Activated B cell treated with CpG ODN at 0.5 μM for 24 hours (primary cell): ENCODE measurements at regions of chr5 and their contacts with region 1.

Region 1: DNA sequence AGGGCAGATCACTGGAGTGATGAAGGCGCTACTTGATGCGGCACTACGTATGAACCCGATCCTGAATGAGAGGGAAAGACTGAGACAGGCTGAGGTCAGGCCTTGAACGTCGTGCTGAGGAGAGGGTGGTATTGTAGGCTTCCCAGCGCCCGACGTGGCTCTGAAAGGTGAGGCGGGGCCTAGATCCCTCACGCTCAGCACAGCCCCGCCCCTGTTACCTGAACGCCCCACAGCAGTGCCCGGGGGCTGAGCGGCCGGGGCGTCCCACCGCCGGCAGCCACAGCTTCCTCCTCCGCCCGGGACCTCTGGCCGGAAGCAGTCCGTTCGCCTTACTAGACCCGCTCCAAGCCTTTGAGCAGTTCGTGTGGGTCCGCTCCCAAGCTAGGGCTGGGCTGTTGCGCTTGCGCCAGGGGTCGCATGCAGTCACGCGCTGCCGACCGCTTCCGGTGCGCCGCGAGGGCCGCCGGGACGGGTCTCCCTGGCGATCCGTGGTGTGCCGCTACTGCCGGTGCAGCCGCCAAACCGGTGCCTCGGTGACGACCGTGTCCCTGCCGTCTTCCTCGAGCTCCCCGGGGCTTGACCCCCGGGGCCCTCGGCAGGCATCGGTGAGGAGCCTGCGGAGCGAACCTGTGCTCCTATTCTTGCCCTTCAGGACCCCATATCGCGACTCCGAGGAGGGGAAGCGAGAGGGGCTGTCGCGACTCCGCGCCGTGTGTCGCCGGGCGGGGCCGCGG is at the starts of genes HMGXB3 and TIGD6:
- DNase-seq: peak; percentile 87
- ATAC-seq: peak; percentile 85
- H3K4me3 Mint-ChIP-seq: peak within 1 kb of the TSS; percentile 95
- H3K27ac Mint-ChIP-seq: peak within 1 kb of the TSS; percentile 91
- H3K4me1 Mint-ChIP-seq: peaks cover 28% of the 10 kb centered on the region
- H3K27me3 Mint-ChIP-seq: no peaks in the 10 kb centered on the region
- CTCF ChIP-seq: no peak
- total RNA-seq, gene HMGXB3: 28.5 and 36.8 TPM in 2 replicates
- total RNA-seq, gene TIGD6: 3.5 and 4.2 TPM in 2 replicates

Region 2: GRCh38 chr5:149357370-149358293 is 642.8 kb before region 1 on chr5 and contains the start of gene PCYOX1L:
- CTCF ChIA-PET with region 1: no interaction called
- POLR2A ChIA-PET with region 1: no interaction called
- intact Hi-C with region 1: loop called (anchors 2 kb)
- DNase-seq: peak; percentile 84
- ATAC-seq: peak; percentile 100
- H3K4me3 Mint-ChIP-seq: peak within 1 kb of the TSS; percentile 92
- H3K27ac Mint-ChIP-seq: peak within 1 kb of the TSS; percentile 65
- H3K4me1 Mint-ChIP-seq: peaks cover 16% of the 10 kb centered on the region
- H3K27me3 Mint-ChIP-seq: no peaks in the 10 kb centered on the region
- CTCF ChIP-seq: no peak
- total RNA-seq, gene PCYOX1L: 6.1 and 9.2 TPM in 2 replicates

Region 3: DNA sequence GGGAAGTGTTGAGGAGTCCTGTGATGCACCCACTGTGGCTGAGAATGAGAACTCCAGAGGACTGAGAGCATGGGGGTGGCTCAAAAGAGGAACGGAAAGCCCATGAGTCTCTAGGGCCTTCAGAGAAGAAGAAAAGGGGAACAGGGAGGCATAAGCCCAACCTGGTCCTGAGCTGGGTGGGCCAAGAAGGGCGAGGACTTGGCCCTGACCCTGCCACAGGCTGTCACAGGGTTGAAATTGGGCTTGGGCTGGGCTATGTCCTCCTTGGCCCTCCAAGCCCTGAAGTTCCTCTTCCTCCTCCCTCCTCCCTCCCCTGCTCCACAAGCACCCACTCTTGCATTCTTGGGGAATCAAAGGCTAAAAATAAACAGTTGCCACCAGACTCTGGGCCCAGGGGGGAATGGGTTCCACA is 319.6 kb before region 1 on chr5:
- CTCF ChIA-PET with region 1: no interaction called
- POLR2A ChIA-PET with region 1: no interaction called
- intact Hi-C with region 1: loop called (anchors 1 kb)
- DNase-seq: peak; percentile 46
- ATAC-seq: peak; percentile 97
- H3K4me3 Mint-ChIP-seq: peak overlapping the region; percentile 28
- H3K27ac Mint-ChIP-seq: peak overlapping the region; percentile 80
- H3K4me1 Mint-ChIP-seq: peaks cover 55% of the 10 kb centered on the region
- H3K27me3 Mint-ChIP-seq: no peaks in the 10 kb centered on the region
- CTCF ChIP-seq: no peak

Region 4: DNA sequence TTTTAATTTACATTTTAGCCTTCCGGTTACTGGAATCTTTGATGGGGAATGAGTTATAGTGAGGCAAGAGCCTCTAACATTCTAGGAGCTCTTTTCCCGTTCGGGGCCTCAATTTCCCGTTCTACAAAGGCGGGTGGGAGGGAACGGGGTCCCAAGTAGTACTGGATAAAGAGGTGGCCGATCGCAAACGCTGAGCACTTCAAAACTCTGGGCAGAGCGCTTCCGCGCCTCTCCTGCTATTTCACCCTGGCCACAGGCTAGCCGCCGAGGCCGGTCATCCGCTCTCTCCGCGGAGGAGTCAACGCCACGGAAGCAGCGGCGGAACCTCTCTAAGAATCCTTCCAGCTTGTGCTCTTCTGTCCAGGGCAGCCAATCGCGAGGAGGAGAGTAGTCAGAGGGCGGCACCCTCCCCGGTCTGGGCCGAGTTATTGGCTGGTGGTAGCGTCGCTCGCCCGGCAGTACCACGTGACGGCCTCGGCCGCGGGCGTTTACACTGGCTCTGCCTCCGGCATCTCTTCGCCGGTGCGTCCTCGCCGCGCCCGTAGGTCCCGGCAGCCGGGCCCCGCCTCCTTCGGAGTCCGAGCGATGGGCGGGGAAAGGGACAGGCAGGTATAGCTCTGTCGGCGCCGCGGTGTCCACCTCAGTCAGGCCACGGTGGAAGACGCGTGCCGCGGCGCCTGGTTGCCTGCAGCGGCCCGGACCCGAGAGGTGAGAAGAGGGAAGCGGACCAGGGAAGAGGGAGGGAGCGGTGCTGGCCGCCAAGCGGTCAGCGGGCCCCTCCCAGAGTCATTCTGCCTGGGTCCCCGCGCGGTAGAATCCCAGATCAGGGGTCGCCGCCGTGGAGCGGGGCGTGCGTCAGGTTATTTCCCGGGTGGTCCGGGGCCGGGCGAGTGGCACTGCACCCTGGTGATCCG is 39.9 kb before region 1 on chr5 and contains the start of gene SLC26A2:
- CTCF ChIA-PET with region 1: interaction called, 3 read pairs
- POLR2A ChIA-PET with region 1: interaction called, 39 read pairs
- intact Hi-C with region 1: loop called (anchors 1 kb)
- DNase-seq: peak; percentile 88
- ATAC-seq: peak; percentile 97
- H3K4me3 Mint-ChIP-seq: peak within 1 kb of the TSS; percentile 98
- H3K27ac Mint-ChIP-seq: peak within 1 kb of the TSS; percentile 98
- H3K4me1 Mint-ChIP-seq: peaks cover 20% of the 10 kb centered on the region
- H3K27me3 Mint-ChIP-seq: no peaks in the 10 kb centered on the region
- CTCF ChIP-seq: no peak
- total RNA-seq, gene SLC26A2: 8.9 and 11.0 TPM in 2 replicates

Region 5: DNA sequence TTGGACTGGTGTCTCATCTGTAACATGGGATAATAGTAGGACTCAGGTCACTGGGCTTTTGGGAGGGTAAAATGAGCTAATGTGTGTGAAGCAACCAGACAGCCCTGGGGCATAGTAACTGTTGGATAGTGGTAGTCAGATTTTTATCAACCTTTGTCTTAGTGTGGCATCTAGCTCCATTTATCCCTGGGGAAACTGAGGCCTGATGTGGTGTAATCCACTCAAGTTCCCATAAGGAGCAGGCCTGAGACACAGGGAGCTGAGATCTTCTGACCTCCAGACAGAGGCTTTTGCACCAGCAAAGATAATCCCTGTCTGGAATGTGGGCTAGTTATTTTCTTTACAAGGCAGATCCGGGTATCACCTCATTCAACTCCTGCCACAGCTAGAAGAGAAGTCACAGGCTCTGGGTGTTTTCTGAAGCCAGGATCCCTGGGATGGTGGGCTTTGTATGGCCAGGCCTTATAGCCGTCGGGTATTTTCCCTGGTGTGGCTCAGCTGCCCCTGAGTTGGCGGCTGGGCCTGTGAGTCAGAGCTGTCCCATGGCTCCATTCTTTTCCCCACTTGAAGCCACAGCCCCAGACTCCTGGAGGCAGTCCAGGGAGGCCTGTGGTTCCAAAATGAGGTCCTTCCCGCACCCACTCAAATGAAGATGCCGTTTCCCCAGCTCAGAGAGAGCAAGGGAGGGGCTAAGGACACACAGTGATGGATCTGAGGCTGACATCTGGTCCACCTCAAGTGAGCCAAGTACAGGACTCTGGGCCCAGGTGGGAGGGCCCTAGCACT is 112.0 kb after region 1 on chr5:
- CTCF ChIA-PET with region 1: no interaction called
- POLR2A ChIA-PET with region 1: no interaction called
- intact Hi-C with region 1: no loop called
- DNase-seq: no peak
- ATAC-seq: no peak
- H3K4me3 Mint-ChIP-seq: no peak overlapping the region
- H3K27ac Mint-ChIP-seq: no peak overlapping the region
- H3K4me1 Mint-ChIP-seq: no peaks in the 10 kb centered on the region
- H3K27me3 Mint-ChIP-seq: peaks cover 4% of the 10 kb centered on the region
- CTCF ChIP-seq: no peak

Region 6: DNA sequence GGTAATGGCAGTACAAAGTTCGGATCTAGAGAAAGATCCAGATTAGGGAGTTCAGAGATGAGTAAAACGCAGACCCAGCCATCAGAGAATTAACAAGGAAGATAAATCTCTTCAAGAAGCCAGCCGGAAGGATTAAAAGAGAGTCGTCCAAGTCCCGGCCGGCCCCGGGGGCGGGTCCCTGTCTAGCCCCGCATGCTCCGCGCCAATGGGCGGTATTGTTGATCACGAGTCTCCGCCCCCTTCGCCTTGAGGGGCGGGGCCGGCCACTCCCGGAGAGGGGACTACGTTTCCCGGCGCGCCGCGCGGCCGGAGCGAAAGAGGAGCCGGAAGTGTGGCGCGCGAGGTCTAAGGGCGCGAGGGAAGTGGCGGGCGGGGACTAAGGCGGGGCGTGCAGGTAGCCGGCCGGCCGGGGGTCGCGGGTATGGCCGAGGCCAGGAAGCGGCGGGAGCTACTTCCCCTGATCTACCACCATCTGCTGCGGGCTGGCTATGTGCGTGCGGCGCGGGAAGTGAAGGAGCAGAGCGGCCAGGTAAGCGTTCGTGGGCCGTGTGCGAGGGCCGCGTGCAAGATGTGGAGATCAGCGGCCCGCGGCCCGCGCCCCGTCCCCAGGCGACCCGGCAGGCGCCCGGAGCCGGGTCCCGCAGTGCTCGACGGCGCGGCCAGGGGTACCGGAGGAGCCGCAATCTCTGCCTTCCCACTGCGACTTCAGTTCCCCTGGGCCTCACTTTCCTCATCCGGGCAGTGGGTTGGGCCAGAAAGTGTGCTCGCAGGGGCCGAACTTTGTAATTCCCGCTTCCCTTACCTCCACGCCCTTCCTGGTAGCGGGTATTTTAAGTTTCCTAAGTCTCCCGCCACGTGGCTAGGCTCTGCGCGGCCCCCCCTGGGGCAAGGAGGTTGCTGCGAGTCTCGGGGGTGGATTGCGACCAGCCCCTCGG is 357.2 kb after region 1 on chr5 and contains the start of gene TCOF1:
- CTCF ChIA-PET with region 1: no interaction called
- POLR2A ChIA-PET with region 1: no interaction called
- intact Hi-C with region 1: loop called (anchors 2 kb)
- DNase-seq: peak; percentile 98
- ATAC-seq: peak; percentile 97
- H3K4me3 Mint-ChIP-seq: peak within 1 kb of the TSS; percentile 89
- H3K27ac Mint-ChIP-seq: peak within 1 kb of the TSS; percentile 93
- H3K4me1 Mint-ChIP-seq: peaks cover 49% of the 10 kb centered on the region
- H3K27me3 Mint-ChIP-seq: no peaks in the 10 kb centered on the region
- CTCF ChIP-seq: no peak
- total RNA-seq, gene TCOF1: 74.7 and 76.1 TPM in 2 replicates

Region 7: DNA sequence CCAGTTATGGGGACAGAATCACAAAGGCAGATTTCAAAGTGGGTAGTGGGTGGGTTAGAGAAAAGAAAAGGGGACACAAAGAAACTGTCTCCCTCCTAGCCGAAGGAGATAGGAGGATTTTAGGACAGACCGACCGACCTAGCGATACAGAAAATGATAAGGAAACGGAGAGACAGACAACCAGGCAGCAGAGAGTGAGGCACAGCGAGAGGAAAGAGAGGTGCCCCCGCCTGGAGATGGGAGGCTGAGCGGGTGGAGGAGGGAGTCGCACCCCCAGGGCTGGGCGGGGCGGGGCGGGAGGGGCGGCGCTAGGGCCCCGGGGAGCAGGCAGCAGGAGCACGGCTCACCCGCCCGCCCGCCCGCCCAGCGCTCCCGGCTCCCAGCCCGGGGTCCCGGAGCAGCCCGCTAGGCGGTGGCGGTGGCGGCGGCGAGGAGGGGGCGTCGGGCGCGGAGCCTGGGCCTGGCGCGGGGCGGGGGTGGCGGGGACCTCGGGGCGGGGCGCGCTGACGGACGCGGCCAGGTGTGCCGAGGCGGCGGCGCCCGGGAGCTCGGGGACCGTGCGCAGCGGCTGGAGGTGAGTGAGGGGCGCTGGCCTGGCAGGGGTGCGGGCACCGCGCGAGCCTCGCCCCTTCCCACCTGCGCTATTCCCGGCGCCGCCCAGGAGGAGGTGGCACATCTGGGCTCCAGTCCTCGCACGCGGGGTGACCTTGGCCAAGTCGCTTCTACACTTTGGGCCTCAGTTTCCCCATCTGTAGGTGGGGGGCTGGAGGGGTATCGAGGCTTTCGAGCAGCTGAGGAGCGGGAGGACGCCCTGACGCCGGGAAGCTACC is 624.1 kb after region 1 on chr5:
- CTCF ChIA-PET with region 1: no interaction called
- POLR2A ChIA-PET with region 1: no interaction called
- intact Hi-C with region 1: loop called (anchors 2 kb)
- DNase-seq: peak; percentile 44
- ATAC-seq: peak; percentile 23
- H3K4me3 Mint-ChIP-seq: peak overlapping the region; percentile 94
- H3K27ac Mint-ChIP-seq: peak overlapping the region; percentile 76
- H3K4me1 Mint-ChIP-seq: peaks cover 57% of the 10 kb centered on the region
- H3K27me3 Mint-ChIP-seq: no peaks in the 10 kb centered on the region
- CTCF ChIP-seq: no peak